Naive thymus-derived CD8-positive, alpha-beta T cell (primary cell): ENCODE measurements at regions of chr6 and their contacts with region 1.

Region 1: GRCh38 chr6:4018172-4018905 is 60.6 kb downstream of the FAM217A start:
- DNase-seq: peak; percentile 91 to 97 (median 95)
- ATAC-seq: peak; percentile 64 to 72
- H3K4me3 Mint-ChIP-seq: peak overlapping the region; percentile 91 to 99 (median 97)
- H3K27ac Mint-ChIP-seq: peak overlapping the region; percentile 91 to 100 (median 97)
- H3K4me1 Mint-ChIP-seq: peaks cover 27 to 79% (median 72%) of the 10 kb centered on the region in 4 donors
- H3K27me3 Mint-ChIP-seq: peaks cover 0 to 2% (median 0%) of the 10 kb centered on the region in 5 donors

Region 2: GRCh38 chr6:2765166-2765895 is 1253.0 kb before region 1 on chr6 and contains the start of gene WRNIP1:
- POLR2A ChIA-PET with region 1: interaction called, 14 read pairs
- DNase-seq: peak; percentile 90 to 99 (median 97)
- ATAC-seq: peak; percentile 83 to 86
- H3K4me3 Mint-ChIP-seq: peak within 1 kb of the TSS; percentile 88 to 97 (median 95)
- H3K27ac Mint-ChIP-seq: peak within 1 kb of the TSS; percentile 94 to 100 (median 98)
- H3K4me1 Mint-ChIP-seq: peaks cover 19 to 56% (median 52%) of the 10 kb centered on the region in 4 donors
- H3K27me3 Mint-ChIP-seq: no peaks in the 10 kb centered on the region
- polyA plus RNA-seq, gene WRNIP1: 33.1 to 61.0 (median 36.3) TPM

Region 3: GRCh38 chr6:3848925-3849605 is 169.3 kb before region 1 on chr6 and contains the start of gene FAM50B:
- POLR2A ChIA-PET with region 1: interaction called, 16 read pairs
- DNase-seq: peak; percentile 78 to 95 (median 88)
- ATAC-seq: peak; percentile 90 to 97
- H3K4me3 Mint-ChIP-seq: peak within 1 kb of the TSS; percentile 70 to 91 (median 81)
- H3K27ac Mint-ChIP-seq: peak within 1 kb of the TSS; percentile 76 to 94 (median 88)
- H3K4me1 Mint-ChIP-seq: peaks cover 0 to 13% (median 6%) of the 10 kb centered on the region in 4 donors
- H3K27me3 Mint-ChIP-seq: no peaks in the 10 kb centered on the region
- polyA plus RNA-seq, gene FAM50B: 2.7 to 12.7 (median 5.8) TPM

Region 4: GRCh38 chr6:3962957-3963303 is 55.4 kb before region 1 on chr6:
- POLR2A ChIA-PET with region 1: no interaction called
- DNase-seq: no peak
- ATAC-seq: no peak
- H3K4me3 Mint-ChIP-seq: no peak overlapping the region
- H3K27ac Mint-ChIP-seq: peak overlapping the region in 1 of 10 donors; percentile 24
- H3K4me1 Mint-ChIP-seq: peaks cover 0 to 1% (median 0%) of the 10 kb centered on the region in 4 donors
- H3K27me3 Mint-ChIP-seq: peaks cover 0 to 8% (median 1%) of the 10 kb centered on the region in 5 donors

Region 5: DNA sequence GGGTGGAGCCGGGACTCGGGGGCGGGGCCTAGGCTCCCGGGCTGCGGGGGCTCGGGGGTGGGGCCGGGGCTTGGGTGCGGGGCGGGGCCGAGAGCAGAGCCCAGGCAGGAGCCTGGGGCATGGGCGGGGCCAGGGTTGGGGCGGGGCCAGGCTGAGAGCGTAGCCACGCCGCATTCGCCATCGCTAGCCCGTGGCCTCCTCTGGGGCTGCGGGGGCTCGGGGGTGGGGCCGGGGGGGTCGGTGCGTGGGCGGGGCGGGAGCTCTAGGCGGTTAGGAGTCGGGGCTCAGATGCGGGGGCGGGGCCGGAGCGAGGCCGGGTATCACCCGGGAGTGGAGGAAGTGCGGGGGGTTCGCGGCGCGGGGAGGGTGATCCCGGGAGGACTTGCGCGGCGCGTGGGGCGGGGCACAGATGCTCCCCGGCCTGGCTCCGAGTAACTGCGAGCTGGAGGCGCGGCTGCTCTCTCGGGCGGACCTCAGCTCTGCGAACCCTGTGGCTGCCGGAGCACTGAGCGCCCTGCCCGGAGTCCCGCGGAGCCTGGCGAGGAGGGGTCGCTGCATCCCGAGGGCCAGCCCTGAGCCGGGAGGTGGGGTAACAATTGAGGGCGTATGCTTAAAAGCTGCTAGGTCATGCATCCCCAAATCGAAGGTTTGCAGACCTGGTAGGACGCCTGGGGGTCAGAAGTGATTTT is 117.5 kb after region 1 on chr6:
- POLR2A ChIA-PET with region 1: interaction called, 31 read pairs
- DNase-seq: peak; percentile 84 to 99 (median 91)
- ATAC-seq: peak; percentile 86 to 88
- H3K4me3 Mint-ChIP-seq: peak overlapping the region; percentile 78 to 92 (median 84)
- H3K27ac Mint-ChIP-seq: peak overlapping the region in 9 of 10 donors; percentile 50 to 90 (median 83)
- H3K4me1 Mint-ChIP-seq: peaks cover 14 to 46% (median 38%) of the 10 kb centered on the region in 4 donors
- H3K27me3 Mint-ChIP-seq: no peaks in the 10 kb centered on the region